H1 (cell line): ENCODE measurements at regions of chr5 and their contacts with region 1.

Region 1: DNA sequence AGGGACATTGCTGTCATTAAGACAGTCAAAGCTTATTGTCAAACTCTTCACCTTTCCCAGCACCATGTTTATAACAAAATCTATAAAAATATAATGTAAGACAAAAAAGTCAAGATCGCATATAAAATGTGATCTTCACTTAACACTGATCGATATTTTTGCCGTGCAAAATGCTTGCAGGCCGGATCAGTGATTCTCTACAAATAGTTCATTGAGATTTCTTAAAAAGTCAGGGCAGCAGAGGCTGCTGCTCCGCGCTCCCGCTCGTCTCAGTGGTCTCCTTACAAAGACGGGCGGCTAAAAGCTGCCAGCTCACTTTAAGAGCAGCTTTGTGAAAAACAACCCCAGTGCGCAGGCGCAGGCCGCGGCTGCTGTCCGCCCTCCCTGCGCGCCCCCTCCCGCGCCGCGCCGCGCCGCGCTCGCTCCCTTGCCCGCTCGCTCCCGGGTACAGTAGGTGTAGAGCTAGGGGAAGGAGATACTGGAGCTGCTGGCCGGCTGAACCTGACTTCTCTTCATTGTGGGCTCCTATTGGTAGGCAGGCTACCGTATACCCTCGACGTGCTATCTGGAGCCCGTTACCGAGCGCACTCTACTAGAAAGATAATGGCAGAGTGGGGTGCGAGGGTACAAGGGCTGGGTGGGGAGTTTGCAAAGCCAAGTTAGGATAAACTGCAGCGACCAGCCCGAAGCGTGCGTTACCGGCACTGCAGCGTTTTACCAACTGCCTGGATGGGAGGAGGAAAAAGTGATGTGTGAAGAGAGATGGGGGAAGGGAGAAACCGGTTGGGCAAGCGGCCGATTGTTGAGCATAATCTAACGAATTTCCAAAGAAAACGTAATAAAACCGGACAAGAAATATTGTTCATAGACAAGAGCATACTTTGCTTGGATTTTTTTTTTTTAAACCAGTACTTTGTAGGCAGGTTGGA is at the start of gene ARRDC3:
- DNase-seq: peak; percentile 90 to 97
- H3K4me3 ChIP-seq: peak within 1 kb of the TSS; percentile 85 to 94 (median 90)
- H3K27ac ChIP-seq: peak within 1 kb of the TSS; percentile 93
- H3K4me1 ChIP-seq: no peaks in the 10 kb centered on the region; a peak in 2 of 7 replicates
- H3K27me3 ChIP-seq: no peaks in the 10 kb centered on the region
- CTCF ChIP-seq: 0 out of 4 replicates have a peak, but pooled peaks of 1 of the 3 experiments have one; percentile 9
- EP300 ChIP-seq: peak in 1 of 2 experiments; percentile 3; a peak in 1 of 3 replicates
- POLR2A ChIP-seq: peak; percentile 92 to 98
- RAD21 ChIP-seq: peak in 1 of 2 experiments; percentile 15; a peak in 1 of 4 replicates
- total RNA-seq, gene ARRDC3: 5.4 and 5.7 TPM in 2 replicates

Region 2: GRCh38 chr5:90353254-90353653 is 1030.0 kb before region 1 on chr5:
- CTCF ChIA-PET with region 1: no interaction called
- POLR2A ChIA-PET with region 1: no interaction called
- DNase-seq: no peak
- H3K4me3 ChIP-seq: no peak overlapping the region
- H3K27ac ChIP-seq: no peak overlapping the region
- H3K4me1 ChIP-seq: no peaks in the 10 kb centered on the region
- H3K27me3 ChIP-seq: no peaks in the 10 kb centered on the region
- CTCF ChIP-seq: no peak
- EP300 ChIP-seq: no peak
- POLR2A ChIP-seq: no peak
- RAD21 ChIP-seq: no peak

Region 3: DNA sequence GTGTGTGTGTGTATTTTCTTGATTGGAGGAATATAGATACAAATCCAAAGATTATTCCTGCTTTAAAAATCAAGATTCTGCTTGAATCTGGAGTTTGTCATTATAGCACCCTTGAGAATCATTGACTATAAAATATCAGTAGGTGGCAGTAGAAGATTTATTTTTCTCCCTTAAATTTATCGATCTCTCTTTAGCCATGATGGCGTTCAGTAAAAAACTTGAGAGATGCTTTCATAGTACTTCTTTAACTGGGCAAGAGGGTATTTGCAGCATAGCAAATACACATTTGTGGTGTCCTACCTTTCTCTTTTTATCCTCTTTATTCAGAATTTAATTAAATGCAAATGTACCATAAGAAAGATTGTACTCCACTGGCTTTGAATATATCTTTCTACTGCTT is 517.0 kb before region 1 on chr5:
- CTCF ChIA-PET with region 1: interaction called, 36 read pairs
- POLR2A ChIA-PET with region 1: interaction called, 3 read pairs
- DNase-seq: no peak
- H3K4me3 ChIP-seq: no peak overlapping the region
- H3K27ac ChIP-seq: no peak overlapping the region
- H3K4me1 ChIP-seq: no peaks in the 10 kb centered on the region; a peak in 1 of 7 replicates
- H3K27me3 ChIP-seq: no peaks in the 10 kb centered on the region
- CTCF ChIP-seq: peak in 1 of 3 experiments; percentile 31; a peak in 2 of 4 replicates
- EP300 ChIP-seq: no peak
- POLR2A ChIP-seq: no peak
- RAD21 ChIP-seq: peak; percentile 57 to 68

Region 4: DNA sequence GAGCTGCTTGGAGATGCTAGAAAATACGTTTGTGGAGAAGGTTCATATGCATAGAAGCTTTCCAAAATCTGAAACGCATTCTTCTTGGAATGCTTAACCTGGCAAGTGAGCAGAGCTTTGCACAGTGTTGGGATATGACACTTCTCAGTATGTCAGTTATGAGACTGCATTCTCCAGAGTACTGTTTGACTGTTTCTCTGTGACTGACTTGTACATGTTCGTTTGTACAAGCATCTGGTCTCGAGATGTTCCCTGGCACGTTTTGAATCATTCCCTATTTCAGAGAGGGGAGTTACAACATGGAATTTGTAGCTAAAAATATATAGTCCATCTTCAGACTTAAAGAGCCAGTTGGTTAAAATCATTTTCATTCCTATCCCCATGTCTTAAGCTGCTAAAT is 272.6 kb before region 1 on chr5:
- CTCF ChIA-PET with region 1: interaction called, 11 read pairs
- POLR2A ChIA-PET with region 1: interaction called, 6 read pairs
- DNase-seq: no peak
- H3K4me3 ChIP-seq: no peak overlapping the region
- H3K27ac ChIP-seq: no peak overlapping the region
- H3K4me1 ChIP-seq: peaks cover 0 to 5% (median 2%) of the 10 kb centered on the region in 4 experiments; a peak in 3 of 7 replicates
- H3K27me3 ChIP-seq: no peaks in the 10 kb centered on the region
- CTCF ChIP-seq: no peak
- EP300 ChIP-seq: no peak
- POLR2A ChIP-seq: no peak
- RAD21 ChIP-seq: no peak

Region 5: DNA sequence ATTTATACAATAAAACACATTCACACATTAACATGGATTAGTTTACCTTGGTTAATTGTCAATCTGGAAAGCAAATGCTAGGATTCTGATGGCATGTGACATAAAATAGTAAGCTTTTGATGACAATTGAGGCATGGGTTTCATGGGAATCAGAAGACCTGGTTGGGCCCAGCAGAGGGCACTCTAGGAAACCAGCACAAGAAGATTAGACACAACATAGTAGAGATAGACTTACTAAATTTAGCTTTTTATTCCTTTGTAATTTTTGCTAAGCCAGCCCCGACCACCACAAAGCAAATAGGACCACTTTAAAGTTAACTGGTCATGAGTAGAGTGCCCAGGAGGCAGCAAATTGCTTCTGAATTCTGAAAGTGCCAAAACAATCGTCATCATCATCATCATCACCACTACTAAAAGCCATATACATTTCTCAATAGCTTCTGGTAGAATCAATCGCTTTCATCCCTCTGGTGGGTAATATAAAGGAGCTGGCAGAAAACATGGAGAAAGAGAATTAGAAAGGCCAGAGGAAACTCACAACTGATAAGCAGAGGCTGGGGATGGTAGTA is 163.4 kb before region 1 on chr5:
- CTCF ChIA-PET with region 1: interaction called, 144 read pairs
- POLR2A ChIA-PET with region 1: interaction called, 13 read pairs
- DNase-seq: no peak
- H3K4me3 ChIP-seq: no peak overlapping the region
- H3K27ac ChIP-seq: no peak overlapping the region
- H3K4me1 ChIP-seq: no peaks in the 10 kb centered on the region
- H3K27me3 ChIP-seq: no peaks in the 10 kb centered on the region
- CTCF ChIP-seq: peak in 2 of 3 experiments; percentile 47 to 59; a peak in 3 of 4 replicates
- EP300 ChIP-seq: no peak
- POLR2A ChIP-seq: no peak
- RAD21 ChIP-seq: peak; percentile 56 to 60

Region 6: GRCh38 chr5:91280362-91281269 is 102.7 kb before region 1 on chr5:
- CTCF ChIA-PET with region 1: interaction called, 13 read pairs
- POLR2A ChIA-PET with region 1: interaction called, 20 read pairs
- DNase-seq: peak; percentile 86 to 87
- H3K4me3 ChIP-seq: peak overlapping the region; percentile 51 to 76 (median 66)
- H3K27ac ChIP-seq: 0 out of 2 replicates have a peak overlapping the region, but pooled peaks have one; percentile 35
- H3K4me1 ChIP-seq: peaks cover 0 to 2% (median 0%) of the 10 kb centered on the region in 4 experiments; a peak in 1 of 7 replicates
- H3K27me3 ChIP-seq: peaks cover 0 to 3% (median 0%) of the 10 kb centered on the region in 4 experiments; a peak in 2 of 7 replicates
- CTCF ChIP-seq: no peak
- EP300 ChIP-seq: peak in 1 of 2 experiments; percentile 43; a peak in 1 of 3 replicates
- POLR2A ChIP-seq: peak; percentile 40 to 62
- RAD21 ChIP-seq: no peak

Region 7: DNA sequence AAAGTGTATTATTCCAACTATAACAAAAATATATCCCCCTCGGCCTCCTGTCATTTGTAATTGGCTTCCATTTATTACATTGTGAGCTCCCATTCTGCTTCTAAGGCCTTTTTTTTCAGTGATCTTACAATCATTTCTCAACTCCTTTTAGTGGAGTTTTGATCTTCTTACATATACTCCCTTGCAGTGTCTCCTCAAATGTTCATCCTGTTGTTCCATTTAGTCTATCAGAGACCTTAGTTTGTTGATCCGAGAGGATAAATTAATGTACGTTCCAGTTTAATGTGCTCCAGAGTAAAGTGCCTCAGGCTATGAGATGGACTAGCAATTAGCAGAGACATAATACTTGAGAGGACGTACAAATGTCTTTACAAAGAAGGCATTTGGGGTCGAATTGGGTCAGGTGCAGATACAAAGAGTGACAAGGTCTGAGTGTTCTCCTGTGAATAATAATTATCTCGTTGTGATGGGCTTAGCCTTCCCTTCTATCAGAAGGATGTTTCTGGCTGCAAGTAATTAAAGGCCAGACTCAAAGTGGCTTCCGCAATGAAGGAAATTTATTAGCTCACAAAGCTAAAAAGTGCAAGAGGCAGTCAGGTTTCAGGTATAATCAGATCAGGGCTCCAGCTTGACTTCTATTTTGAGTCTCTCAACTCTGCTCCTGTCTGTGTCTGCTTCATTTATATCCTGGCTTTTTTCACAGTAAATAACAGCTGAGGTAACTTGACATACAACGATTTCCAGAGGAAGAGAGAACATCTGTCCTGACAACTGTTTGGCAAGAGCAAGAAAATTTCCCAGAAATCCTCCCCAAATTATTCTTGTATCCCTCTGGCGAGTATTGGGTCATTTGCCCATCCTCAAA is 30.2 kb before region 1 on chr5:
- CTCF ChIA-PET with region 1: interaction called, 9 read pairs
- POLR2A ChIA-PET with region 1: interaction called, 11 read pairs
- DNase-seq: no peak
- H3K4me3 ChIP-seq: no peak overlapping the region
- H3K27ac ChIP-seq: no peak overlapping the region
- H3K4me1 ChIP-seq: peaks cover 0 to 5% (median 1%) of the 10 kb centered on the region in 4 experiments; a peak in 2 of 7 replicates
- H3K27me3 ChIP-seq: no peaks in the 10 kb centered on the region
- CTCF ChIP-seq: no peak
- EP300 ChIP-seq: no peak
- POLR2A ChIP-seq: no peak
- RAD21 ChIP-seq: no peak

Region 8: GRCh38 chr5:91434348-91434747 is 51.1 kb after region 1 on chr5:
- CTCF ChIA-PET with region 1: interaction called, 11 read pairs
- POLR2A ChIA-PET with region 1: interaction called, 3 read pairs
- DNase-seq: no peak
- H3K4me3 ChIP-seq: no peak overlapping the region
- H3K27ac ChIP-seq: no peak overlapping the region
- H3K4me1 ChIP-seq: peaks cover 0 to 3% (median 1%) of the 10 kb centered on the region in 4 experiments; a peak in 3 of 7 replicates
- H3K27me3 ChIP-seq: no peaks in the 10 kb centered on the region
- CTCF ChIP-seq: no peak
- EP300 ChIP-seq: no peak
- POLR2A ChIP-seq: no peak
- RAD21 ChIP-seq: no peak

Region 9: GRCh38 chr5:91535499-91535898 is 152.2 kb after region 1 on chr5:
- CTCF ChIA-PET with region 1: no interaction called
- POLR2A ChIA-PET with region 1: no interaction called
- DNase-seq: no peak
- H3K4me3 ChIP-seq: no peak overlapping the region
- H3K27ac ChIP-seq: no peak overlapping the region
- H3K4me1 ChIP-seq: no peaks in the 10 kb centered on the region
- H3K27me3 ChIP-seq: no peaks in the 10 kb centered on the region
- CTCF ChIP-seq: no peak
- EP300 ChIP-seq: no peak
- POLR2A ChIP-seq: no peak
- RAD21 ChIP-seq: no peak

Region 10: GRCh38 chr5:92051741-92052140 is 668.5 kb after region 1 on chr5:
- CTCF ChIA-PET with region 1: no interaction called
- POLR2A ChIA-PET with region 1: no interaction called
- DNase-seq: no peak
- H3K4me3 ChIP-seq: no peak overlapping the region
- H3K27ac ChIP-seq: no peak overlapping the region
- H3K4me1 ChIP-seq: no peaks in the 10 kb centered on the region
- H3K27me3 ChIP-seq: no peaks in the 10 kb centered on the region
- CTCF ChIP-seq: no peak
- EP300 ChIP-seq: no peak
- POLR2A ChIP-seq: no peak
- RAD21 ChIP-seq: no peak